ENCODE measurements at regions of chr4 and their contacts with region 1.

Region 1: GRCh38 chr4:53908661-53909078 is 155.7 kb downstream of the CHIC2 start:
- DNase-seq: peak; percentile 86
- H3K4me3 ChIP-seq: peak overlapping the region in 2 of 3 experiments; percentile 7 to 16
- H3K27ac ChIP-seq: peak overlapping the region; percentile 28
- H3K4me1 ChIP-seq: peaks cover 47% of the 10 kb centered on the region
- H3K27me3 ChIP-seq: no peaks in the 10 kb centered on the region
- CTCF ChIP-seq: peak; percentile 76 to 88

Region 2: DNA sequence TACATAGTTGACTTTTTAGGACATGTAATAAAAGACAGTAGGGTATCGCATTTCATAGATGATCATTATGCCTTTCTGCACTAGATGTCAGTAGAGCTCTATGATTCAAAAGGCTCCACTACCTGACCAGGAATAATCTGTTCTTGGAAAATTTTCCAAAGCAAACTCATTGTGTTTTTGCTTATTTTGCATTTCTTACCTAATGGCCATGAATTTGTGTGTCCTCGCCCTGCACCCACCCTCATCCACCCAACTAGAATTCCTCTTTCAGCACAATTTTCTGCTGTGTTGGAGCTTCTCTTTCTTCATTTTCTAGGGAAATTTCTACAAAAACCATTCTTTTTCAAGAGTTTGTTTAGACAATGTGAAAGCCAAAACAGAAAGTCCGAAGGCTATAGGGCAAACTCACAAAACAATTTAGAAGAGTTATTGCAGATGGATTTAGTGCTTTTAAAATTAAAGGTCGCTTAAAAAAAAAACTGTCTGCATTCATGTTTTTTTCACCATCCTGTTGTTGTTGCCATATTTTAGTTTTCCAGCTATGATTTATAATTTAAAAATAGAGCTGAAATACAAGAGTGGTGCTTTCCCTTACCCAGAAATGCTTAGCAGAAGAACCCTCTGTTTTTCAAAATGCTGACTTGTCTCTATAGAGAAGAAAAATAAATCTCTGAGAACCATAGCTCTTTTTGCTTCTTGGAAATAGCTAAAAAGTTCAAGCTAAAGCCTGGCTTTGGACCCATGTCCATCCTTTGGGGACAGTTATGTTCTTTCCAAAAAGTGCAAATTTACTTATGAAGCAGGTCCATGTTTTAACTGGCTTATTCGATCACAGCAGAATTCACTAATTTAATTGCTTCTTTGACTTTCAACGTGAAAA is 1673.9 kb before region 1 on chr4:
- CTCF ChIA-PET with region 1: no interaction called
- dilution Hi-C with region 1: no loop called
- in situ Hi-C with region 1: no loop called
- intact Hi-C with region 1: loop called (anchors 2 kb)
- DNase-seq: peak; percentile 41
- H3K4me3 ChIP-seq: no peak overlapping the region
- H3K27ac ChIP-seq: no peak overlapping the region
- H3K4me1 ChIP-seq: no peaks in the 10 kb centered on the region
- H3K27me3 ChIP-seq: peaks cover 5% of the 10 kb centered on the region
- CTCF ChIP-seq: peak; percentile 58 to 68

Region 3: DNA sequence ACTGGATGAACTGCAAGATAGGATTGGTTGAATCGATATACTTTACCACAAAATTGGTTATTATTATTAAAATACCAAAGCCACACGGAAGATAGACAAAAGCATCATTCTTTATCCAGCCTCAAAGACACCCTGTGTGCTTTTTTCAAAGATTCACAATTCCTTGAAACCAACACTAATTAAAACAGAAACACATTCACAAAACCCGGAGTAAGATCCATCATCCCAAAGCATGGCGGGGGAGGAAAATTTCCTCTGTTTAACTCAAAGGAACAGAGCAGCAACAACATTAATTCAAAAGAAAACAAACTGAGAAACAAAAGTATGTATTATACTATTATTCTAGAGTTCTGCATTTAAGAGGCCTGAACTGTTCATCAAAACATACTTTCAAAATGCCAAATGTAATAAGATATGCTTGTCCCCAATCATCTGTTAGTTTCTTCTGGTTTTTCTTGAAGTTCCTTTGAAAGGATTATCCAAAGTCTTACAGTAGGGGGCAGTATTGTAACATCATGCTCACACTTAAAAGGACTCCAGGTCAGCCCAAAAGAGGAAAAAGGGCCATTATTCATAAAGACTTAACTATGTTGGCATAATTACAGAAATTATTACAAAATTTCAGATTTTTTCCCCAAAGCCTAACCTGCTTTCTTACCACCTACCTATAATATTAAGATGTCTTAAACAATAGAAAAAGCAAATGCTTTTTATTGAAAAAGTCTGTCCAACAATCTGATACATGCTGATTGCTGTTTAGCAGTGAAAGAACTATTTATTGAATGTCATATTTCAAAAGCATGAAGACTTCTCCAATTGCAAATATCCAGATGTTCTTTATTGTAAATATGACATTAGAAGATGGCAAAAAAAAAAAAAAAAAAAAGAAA is 711.5 kb before region 1 on chr4:
- CTCF ChIA-PET with region 1: no interaction called
- dilution Hi-C with region 1: no loop called
- in situ Hi-C with region 1: no loop called
- intact Hi-C with region 1: loop called (anchors 2 kb)
- DNase-seq: peak; percentile 47
- H3K4me3 ChIP-seq: no peak overlapping the region
- H3K27ac ChIP-seq: no peak overlapping the region
- H3K4me1 ChIP-seq: no peaks in the 10 kb centered on the region
- H3K27me3 ChIP-seq: no peaks in the 10 kb centered on the region
- CTCF ChIP-seq: peak; percentile 48 to 75

Region 4: GRCh38 chr4:53818104-53818503 is 90.6 kb before region 1 on chr4:
- CTCF ChIA-PET with region 1: no interaction called
- dilution Hi-C with region 1: no loop called
- in situ Hi-C with region 1: no loop called
- intact Hi-C with region 1: no loop called
- DNase-seq: no peak
- H3K4me3 ChIP-seq: no peak overlapping the region
- H3K27ac ChIP-seq: no peak overlapping the region
- H3K4me1 ChIP-seq: no peaks in the 10 kb centered on the region
- H3K27me3 ChIP-seq: no peaks in the 10 kb centered on the region
- CTCF ChIP-seq: no peak

Region 5: GRCh38 chr4:53924333-53925054 is 15.8 kb after region 1 on chr4:
- CTCF ChIA-PET with region 1: interaction called, 5 read pairs
- dilution Hi-C with region 1: no loop called
- in situ Hi-C with region 1: no loop called
- intact Hi-C with region 1: loop called (anchors 1 kb)
- DNase-seq: no peak
- H3K4me3 ChIP-seq: no peak overlapping the region
- H3K27ac ChIP-seq: no peak overlapping the region
- H3K4me1 ChIP-seq: peaks cover 31% of the 10 kb centered on the region
- H3K27me3 ChIP-seq: no peaks in the 10 kb centered on the region
- CTCF ChIP-seq: no peak

Region 6: DNA sequence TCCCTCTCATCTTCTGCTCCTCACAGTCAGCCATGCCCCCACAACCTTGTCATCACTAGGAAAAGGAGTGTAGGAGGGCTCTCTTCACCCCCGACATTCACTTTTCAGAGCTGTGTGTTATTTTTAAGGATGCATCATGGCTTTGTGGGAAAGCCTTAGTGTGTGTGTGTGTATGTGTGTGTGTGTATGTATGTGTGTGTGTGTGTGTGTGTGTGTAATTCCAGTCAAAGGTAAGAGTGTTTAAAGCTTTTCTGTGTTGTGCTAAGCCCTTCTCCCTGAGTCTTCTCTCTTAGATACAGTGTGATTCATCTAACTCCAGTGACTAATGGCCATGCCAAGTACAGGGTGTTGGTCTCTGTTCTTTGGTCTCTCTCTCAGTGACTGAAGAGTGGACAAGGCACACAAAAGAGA is 79.1 kb after region 1 on chr4:
- CTCF ChIA-PET with region 1: no interaction called
- dilution Hi-C with region 1: loop called (anchors 5 kb)
- in situ Hi-C with region 1: no loop called
- intact Hi-C with region 1: loop called (anchors 5 kb)
- DNase-seq: peak; percentile 88
- H3K4me3 ChIP-seq: no peak overlapping the region
- H3K27ac ChIP-seq: peak overlapping the region; percentile 30
- H3K4me1 ChIP-seq: peaks cover 34% of the 10 kb centered on the region
- H3K27me3 ChIP-seq: no peaks in the 10 kb centered on the region
- CTCF ChIP-seq: no peak

Region 7: DNA sequence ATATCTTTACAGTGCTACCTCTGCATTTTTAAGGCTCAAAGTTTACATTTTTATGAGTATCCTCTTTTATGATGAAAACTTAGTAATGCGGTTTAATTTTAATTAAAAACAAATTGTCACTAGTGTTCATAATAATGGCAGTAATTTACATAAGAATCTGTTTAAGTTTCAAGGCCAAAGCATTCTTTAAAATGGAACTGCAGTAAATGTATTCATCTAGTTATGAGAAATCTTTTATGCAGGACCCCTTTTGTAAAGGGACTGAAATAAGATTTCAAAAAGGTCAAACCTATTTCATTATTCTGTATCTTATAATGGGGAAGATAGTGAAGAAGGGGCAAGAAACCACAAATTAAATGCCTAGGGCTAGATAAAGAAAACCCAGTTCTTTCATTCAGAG is 118.6 kb after region 1 on chr4:
- CTCF ChIA-PET with region 1: no interaction called
- dilution Hi-C with region 1: no loop called
- in situ Hi-C with region 1: no loop called
- intact Hi-C with region 1: no loop called
- DNase-seq: no peak
- H3K4me3 ChIP-seq: no peak overlapping the region
- H3K27ac ChIP-seq: no peak overlapping the region
- H3K4me1 ChIP-seq: peaks cover 3% of the 10 kb centered on the region
- H3K27me3 ChIP-seq: no peaks in the 10 kb centered on the region
- CTCF ChIP-seq: no peak

Region 8: DNA sequence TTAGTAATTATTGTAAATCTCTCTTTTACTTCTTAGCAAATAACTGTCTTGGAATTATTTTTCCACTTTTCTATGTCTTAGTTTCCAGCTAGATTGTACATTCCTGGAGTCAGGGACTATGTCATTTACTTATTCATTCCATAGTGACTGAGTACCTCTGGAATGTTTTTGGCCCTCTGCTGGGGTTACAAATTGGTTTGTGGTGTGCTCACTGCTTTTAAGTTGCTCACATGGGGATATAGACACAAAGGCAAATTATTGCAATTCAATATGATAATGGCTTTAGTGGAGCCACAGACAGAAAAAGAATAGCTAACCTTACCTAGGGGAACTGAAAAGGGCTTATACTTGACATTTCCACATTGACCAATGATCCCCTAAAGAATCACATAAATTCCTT is 256.8 kb after region 1 on chr4:
- CTCF ChIA-PET with region 1: no interaction called
- dilution Hi-C with region 1: no loop called
- in situ Hi-C with region 1: no loop called
- intact Hi-C with region 1: loop called (anchors 5 kb)
- DNase-seq: peak; percentile 75
- H3K4me3 ChIP-seq: no peak overlapping the region
- H3K27ac ChIP-seq: peak overlapping the region; percentile 18
- H3K4me1 ChIP-seq: peaks cover 19% of the 10 kb centered on the region
- H3K27me3 ChIP-seq: no peaks in the 10 kb centered on the region
- CTCF ChIP-seq: peak in 1 of 2 donors; percentile 40

Region 9: GRCh38 chr4:54228056-54228527 is 319.4 kb after region 1 on chr4:
- CTCF ChIA-PET with region 1: interaction called, 18 read pairs
- dilution Hi-C with region 1: no loop called
- in situ Hi-C with region 1: loop called in 1 of 2 experiments (anchors 5 kb)
- intact Hi-C with region 1: loop called (anchors 1 kb)
- DNase-seq: peak; percentile 65
- H3K4me3 ChIP-seq: peak overlapping the region; percentile 39 to 66 (median 53)
- H3K27ac ChIP-seq: no peak overlapping the region
- H3K4me1 ChIP-seq: peaks cover 24% of the 10 kb centered on the region
- H3K27me3 ChIP-seq: peaks cover 24% of the 10 kb centered on the region
- CTCF ChIP-seq: peak; percentile 88 to 95

Region 10: GRCh38 chr4:54414545-54414944 is 505.9 kb after region 1 on chr4:
- CTCF ChIA-PET with region 1: no interaction called
- dilution Hi-C with region 1: no loop called
- in situ Hi-C with region 1: no loop called
- intact Hi-C with region 1: no loop called
- DNase-seq: no peak
- H3K4me3 ChIP-seq: no peak overlapping the region
- H3K27ac ChIP-seq: no peak overlapping the region
- H3K4me1 ChIP-seq: no peaks in the 10 kb centered on the region
- H3K27me3 ChIP-seq: no peaks in the 10 kb centered on the region
- CTCF ChIP-seq: no peak

Measured in mammary epithelial cell (primary cell).